Activated CD4-positive, alpha-beta T cell treated with anti-CD3 and anti-CD28 coated beads for 36 hours (primary cell): ENCODE measurements at regions of chr13 and their contacts with region 1.

Region 1: DNA sequence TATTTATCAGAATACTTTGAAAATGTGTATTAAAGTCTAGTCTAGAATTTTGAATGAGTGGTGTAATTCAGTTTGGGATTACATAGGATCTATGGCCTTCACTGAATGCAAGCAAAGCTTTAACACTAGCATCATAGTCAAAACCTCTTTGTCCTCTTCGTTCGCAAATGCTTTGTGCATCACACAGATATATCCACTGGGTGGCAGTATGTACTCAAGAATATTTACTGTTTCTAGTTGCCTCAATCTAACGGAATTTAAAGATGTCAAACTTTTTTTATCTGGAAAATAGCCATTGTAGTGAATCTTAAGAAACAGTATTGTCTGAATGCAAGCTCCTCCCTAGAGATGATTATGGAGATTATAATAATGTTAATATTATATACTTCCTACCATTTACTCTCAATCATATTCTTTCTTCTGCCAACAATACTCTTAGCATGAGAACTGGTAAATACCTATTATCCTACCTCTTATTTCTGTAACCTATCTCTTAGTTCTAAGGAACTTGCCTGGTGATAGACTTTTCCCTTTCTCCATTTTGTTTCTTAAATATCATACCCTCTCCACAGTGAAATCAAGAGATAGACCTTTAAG is 25.8 kb downstream of the LACC1 start:
- DNase-seq: peak; percentile 27
- ATAC-seq: peak; percentile 64
- H3K4me3 Mint-ChIP-seq: no peak overlapping the region
- H3K27ac Mint-ChIP-seq: no peak overlapping the region
- H3K4me1 Mint-ChIP-seq: peaks cover 7% of the 10 kb centered on the region
- H3K27me3 Mint-ChIP-seq: peaks cover 5% of the 10 kb centered on the region

Region 2: GRCh38 chr13:43411741-43412140 is 493.8 kb before region 1 on chr13:
- CTCF ChIA-PET with region 1: no interaction called
- POLR2A ChIA-PET with region 1: no interaction called
- intact Hi-C with region 1: no loop called
- DNase-seq: no peak
- ATAC-seq: no peak
- H3K4me3 Mint-ChIP-seq: no peak overlapping the region
- H3K27ac Mint-ChIP-seq: no peak overlapping the region
- H3K4me1 Mint-ChIP-seq: no peaks in the 10 kb centered on the region
- H3K27me3 Mint-ChIP-seq: peaks cover 9% of the 10 kb centered on the region

Region 3: GRCh38 chr13:44141725-44142539 is 236.4 kb after region 1 on chr13:
- CTCF ChIA-PET with region 1: interaction called, 3 read pairs
- POLR2A ChIA-PET with region 1: no interaction called
- intact Hi-C with region 1: loop called in 1 of 2 experiments (anchors 5 kb)
- DNase-seq: peak; percentile 96
- ATAC-seq: peak; percentile 100
- H3K4me3 Mint-ChIP-seq: peak overlapping the region; percentile 87
- H3K27ac Mint-ChIP-seq: peak overlapping the region; percentile 90
- H3K4me1 Mint-ChIP-seq: peaks cover 15% of the 10 kb centered on the region
- H3K27me3 Mint-ChIP-seq: peaks cover 4% of the 10 kb centered on the region

Region 4: GRCh38 chr13:44470638-44471562 is 565.4 kb after region 1 on chr13:
- CTCF ChIA-PET with region 1: interaction called, 19 read pairs
- POLR2A ChIA-PET with region 1: no interaction called
- intact Hi-C with region 1: loop called (anchors 1 kb)
- DNase-seq: no peak
- ATAC-seq: no peak
- H3K4me3 Mint-ChIP-seq: no peak overlapping the region
- H3K27ac Mint-ChIP-seq: no peak overlapping the region
- H3K4me1 Mint-ChIP-seq: no peaks in the 10 kb centered on the region
- H3K27me3 Mint-ChIP-seq: no peaks in the 10 kb centered on the region

Region 5: GRCh38 chr13:44710576-44710975 is 805.0 kb after region 1 on chr13:
- CTCF ChIA-PET with region 1: no interaction called
- POLR2A ChIA-PET with region 1: no interaction called
- intact Hi-C with region 1: no loop called
- DNase-seq: peak; percentile 54
- ATAC-seq: peak; percentile 100
- H3K4me3 Mint-ChIP-seq: no peak overlapping the region
- H3K27ac Mint-ChIP-seq: no peak overlapping the region
- H3K4me1 Mint-ChIP-seq: peaks cover 13% of the 10 kb centered on the region
- H3K27me3 Mint-ChIP-seq: peaks cover 11% of the 10 kb centered on the region

Region 6: DNA sequence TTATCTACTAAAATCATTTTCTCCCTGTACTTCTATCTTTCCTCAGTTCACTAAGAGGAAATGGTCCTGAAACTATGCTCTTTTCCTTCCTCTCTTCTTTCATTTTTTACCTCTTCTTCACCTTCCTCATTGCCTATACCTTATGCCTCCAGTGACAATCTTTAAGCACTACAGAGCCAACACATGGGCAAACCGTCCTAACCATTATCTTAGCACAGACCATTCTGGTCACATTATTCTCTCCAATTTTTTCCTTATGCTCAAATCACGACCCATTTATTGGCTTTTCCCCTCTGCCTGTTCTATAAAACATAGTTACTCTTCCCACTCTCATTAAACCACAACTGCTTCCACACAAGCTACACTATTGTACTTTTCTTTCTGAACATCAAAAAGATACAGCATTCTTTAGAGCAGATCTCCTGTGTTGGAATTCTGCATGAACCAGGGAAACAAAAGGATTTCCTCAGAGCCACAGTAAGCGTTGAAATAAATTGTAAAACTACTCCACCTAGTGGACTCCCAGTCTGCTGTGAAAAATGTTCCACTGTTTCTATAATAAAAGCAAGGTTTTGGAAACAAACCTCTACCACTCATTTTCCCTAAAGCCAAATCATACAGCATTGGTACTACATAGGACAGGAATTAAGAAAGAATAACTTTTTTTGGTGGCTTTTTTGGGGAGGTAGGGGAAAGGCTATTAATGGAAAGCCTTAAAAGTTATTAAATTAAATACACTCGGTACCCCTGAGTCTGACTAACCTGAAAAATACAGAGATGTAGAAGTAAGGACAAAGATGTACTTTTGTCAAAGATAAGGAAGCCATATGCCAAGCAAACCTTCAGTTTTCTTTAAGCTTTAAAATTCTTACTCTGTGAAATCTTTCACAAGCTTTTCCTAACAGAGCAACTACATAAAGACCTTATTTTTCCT is 1064.3 kb after region 1 on chr13:
- CTCF ChIA-PET with region 1: interaction called, 3 read pairs
- POLR2A ChIA-PET with region 1: no interaction called
- intact Hi-C with region 1: loop called in 1 of 2 experiments (anchors 5 kb)
- DNase-seq: no peak
- ATAC-seq: no peak
- H3K4me3 Mint-ChIP-seq: no peak overlapping the region
- H3K27ac Mint-ChIP-seq: no peak overlapping the region
- H3K4me1 Mint-ChIP-seq: peaks cover 2% of the 10 kb centered on the region
- H3K27me3 Mint-ChIP-seq: no peaks in the 10 kb centered on the region